Calu3 (cell line): ENCODE measurements at regions of chr16 and their contacts with region 1.

Region 1: DNA sequence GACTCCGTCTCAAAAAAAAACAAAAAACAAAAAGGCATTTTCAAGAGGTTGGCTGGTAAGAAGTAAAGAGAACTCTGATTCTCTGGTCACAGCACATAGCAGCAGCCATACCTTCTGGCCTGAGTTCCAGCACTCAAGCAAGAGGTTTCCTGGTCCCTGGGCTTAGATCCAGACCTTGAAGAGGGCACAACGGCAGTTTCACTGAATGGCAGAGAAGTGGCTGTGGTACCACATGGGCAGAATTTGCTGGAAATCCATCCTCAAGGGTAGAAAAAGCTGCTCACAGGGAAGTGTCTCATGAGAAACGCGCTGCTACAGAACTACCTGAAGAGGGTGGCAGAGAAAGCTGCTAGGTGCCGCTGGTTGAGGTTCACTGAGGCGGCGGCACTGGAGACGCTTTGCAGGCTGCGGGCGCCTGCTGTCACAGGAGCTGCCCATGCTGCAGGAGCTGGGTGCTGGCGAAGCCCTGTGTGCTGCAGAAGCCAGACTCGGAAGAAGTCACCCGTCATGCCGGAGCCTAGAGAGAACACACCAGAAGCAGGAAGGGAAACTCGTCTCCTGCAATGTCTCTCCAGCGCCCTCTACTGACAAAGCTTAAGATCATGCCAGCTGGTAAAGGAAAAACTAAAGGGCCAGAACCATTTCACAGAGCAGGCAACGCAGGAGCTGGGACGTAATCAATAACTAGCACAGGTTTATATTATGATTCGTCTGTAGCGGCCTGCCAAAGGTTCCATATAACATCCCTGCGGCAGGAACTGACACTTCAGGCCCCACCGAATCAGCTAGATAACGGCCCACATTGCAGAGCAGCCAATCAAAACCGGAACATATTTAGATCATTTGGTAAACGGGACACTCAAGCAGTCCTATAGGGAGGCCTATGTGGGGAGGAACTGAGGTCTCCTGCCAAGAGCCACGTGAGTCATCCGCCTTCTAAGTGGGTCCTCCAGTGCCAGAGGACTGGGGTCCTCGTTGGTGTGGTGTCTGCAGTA is 5.4 kb upstream of the ZNF213 start:
- DNase-seq: peak; percentile 89
- H3K4me3 Mint-ChIP-seq: peak overlapping the region; percentile 73
- H3K27ac Mint-ChIP-seq: peak overlapping the region; percentile 39
- H3K4me1 Mint-ChIP-seq: peaks cover 14% of the 10 kb centered on the region
- H3K27me3 Mint-ChIP-seq: no peaks in the 10 kb centered on the region
- CTCF ChIP-seq: peak; percentile 95

Region 2: GRCh38 chr16:3029537-3030402 is 99.7 kb before region 1 on chr16:
- CTCF ChIA-PET with region 1: interaction called, 13 read pairs
- intact Hi-C with region 1: no loop called
- DNase-seq: no peak
- H3K4me3 Mint-ChIP-seq: no peak overlapping the region
- H3K27ac Mint-ChIP-seq: peak overlapping the region; percentile 21
- H3K4me1 Mint-ChIP-seq: no peaks in the 10 kb centered on the region
- H3K27me3 Mint-ChIP-seq: no peaks in the 10 kb centered on the region
- CTCF ChIP-seq: no peak

Region 3: DNA sequence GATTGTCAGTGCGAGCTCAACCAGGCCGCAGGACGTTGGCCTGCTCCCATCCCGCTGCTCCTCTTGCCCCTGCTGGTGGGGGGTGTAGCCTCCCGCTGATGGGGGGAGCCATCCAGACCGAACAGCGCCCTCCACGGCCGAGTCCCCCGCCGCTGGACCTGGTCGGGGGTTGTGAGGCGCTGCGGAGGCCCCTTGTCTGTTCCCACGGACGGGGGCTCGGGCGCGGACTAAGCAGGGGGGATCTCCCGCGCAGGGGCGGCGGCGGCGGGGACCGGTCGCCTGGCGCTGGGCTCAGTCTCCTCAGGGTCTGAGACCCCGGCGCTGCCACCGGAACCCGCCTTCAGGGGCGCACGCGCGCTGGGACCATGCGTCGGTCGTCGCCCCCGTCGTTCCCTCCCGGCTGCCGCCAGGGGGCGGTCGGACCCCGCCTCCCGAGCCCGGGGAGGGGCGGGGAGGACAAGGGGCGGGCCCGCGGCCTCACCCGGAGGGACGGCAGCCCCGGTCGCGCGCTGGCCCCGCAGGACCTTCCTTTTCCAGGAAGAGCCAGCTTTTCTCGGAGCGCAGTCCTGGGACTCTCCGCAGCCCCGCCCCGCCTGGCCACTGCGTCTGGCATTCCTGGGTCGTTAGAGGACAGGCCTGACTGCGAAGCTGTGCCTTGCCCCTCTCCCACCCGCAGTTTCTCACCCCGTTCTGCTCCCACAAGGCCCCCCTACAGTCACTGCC is 70.3 kb before region 1 on chr16:
- CTCF ChIA-PET with region 1: interaction called, 48 read pairs
- intact Hi-C with region 1: loop called (anchors 2 kb)
- DNase-seq: peak; percentile 97
- H3K4me3 Mint-ChIP-seq: peak overlapping the region; percentile 96
- H3K27ac Mint-ChIP-seq: peak overlapping the region; percentile 55
- H3K4me1 Mint-ChIP-seq: peaks cover 2% of the 10 kb centered on the region
- H3K27me3 Mint-ChIP-seq: no peaks in the 10 kb centered on the region
- CTCF ChIP-seq: peak; percentile 97

Region 4: GRCh38 chr16:3106205-3106928 is 23.1 kb before region 1 on chr16:
- CTCF ChIA-PET with region 1: interaction called, 10 read pairs
- intact Hi-C with region 1: loop called (anchors 2 kb)
- DNase-seq: peak; percentile 98
- H3K4me3 Mint-ChIP-seq: peak overlapping the region; percentile 75
- H3K27ac Mint-ChIP-seq: peak overlapping the region; percentile 54
- H3K4me1 Mint-ChIP-seq: peaks cover 8% of the 10 kb centered on the region
- H3K27me3 Mint-ChIP-seq: no peaks in the 10 kb centered on the region
- CTCF ChIP-seq: no peak

Region 5: GRCh38 chr16:3150346-3151218 is 21.1 kb after region 1 on chr16:
- CTCF ChIA-PET with region 1: interaction called, 19 read pairs
- intact Hi-C with region 1: no loop called
- DNase-seq: peak; percentile 99
- H3K4me3 Mint-ChIP-seq: peak overlapping the region; percentile 89
- H3K27ac Mint-ChIP-seq: peak overlapping the region; percentile 98
- H3K4me1 Mint-ChIP-seq: peaks cover 20% of the 10 kb centered on the region
- H3K27me3 Mint-ChIP-seq: peaks cover 3% of the 10 kb centered on the region
- CTCF ChIP-seq: no peak

Region 6: GRCh38 chr16:3158471-3159314 is 29.3 kb after region 1 on chr16:
- CTCF ChIA-PET with region 1: interaction called, 19 read pairs
- intact Hi-C with region 1: no loop called
- DNase-seq: peak; percentile 98
- H3K4me3 Mint-ChIP-seq: peak overlapping the region; percentile 84
- H3K27ac Mint-ChIP-seq: peak overlapping the region; percentile 77
- H3K4me1 Mint-ChIP-seq: peaks cover 18% of the 10 kb centered on the region
- H3K27me3 Mint-ChIP-seq: no peaks in the 10 kb centered on the region
- CTCF ChIP-seq: no peak

Region 7: DNA sequence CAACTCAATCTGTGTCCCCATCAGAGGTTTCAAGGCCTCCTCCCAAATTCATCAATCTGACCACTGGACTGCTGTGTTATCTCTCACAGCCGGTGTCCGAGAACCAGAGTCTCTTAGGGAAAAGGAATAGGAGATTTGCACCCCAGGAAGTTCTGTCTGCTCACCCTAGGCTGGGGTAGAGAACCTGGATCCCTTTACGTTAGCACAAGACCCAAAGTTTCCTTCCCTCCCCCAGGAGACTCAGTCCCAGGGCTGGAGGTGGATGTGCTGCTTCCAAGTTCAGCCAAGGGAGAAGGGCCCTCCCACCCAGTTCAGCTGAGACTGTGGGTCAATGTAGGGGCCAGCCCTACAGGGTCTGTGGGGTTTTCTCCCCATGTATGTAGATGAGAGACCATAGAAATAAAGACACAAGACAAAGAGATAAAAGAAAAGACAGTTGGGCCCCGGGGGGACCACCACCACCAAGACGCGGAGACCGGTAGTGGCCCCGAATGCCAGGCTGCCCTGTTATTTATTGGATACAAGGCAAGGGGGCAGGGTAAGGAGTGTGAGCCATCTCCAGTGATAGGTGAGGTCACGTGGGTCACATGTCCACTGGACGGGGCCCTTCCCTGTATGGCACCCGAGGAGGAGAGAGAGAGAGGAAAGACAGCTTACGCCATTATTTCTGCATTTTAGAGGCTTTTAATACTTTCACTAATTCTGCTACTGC is 35.8 kb after region 1 on chr16:
- CTCF ChIA-PET with region 1: interaction called, 12 read pairs
- intact Hi-C with region 1: no loop called
- DNase-seq: no peak
- H3K4me3 Mint-ChIP-seq: peak overlapping the region; percentile 5
- H3K27ac Mint-ChIP-seq: no peak overlapping the region
- H3K4me1 Mint-ChIP-seq: peaks cover 10% of the 10 kb centered on the region
- H3K27me3 Mint-ChIP-seq: peaks cover 26% of the 10 kb centered on the region
- CTCF ChIP-seq: no peak